AG04449 (cell line): ENCODE measurements at regions of chr19 and their contacts with region 1.

Region 1: GRCh38 chr19:51338563-51339312 is 3.2 kb downstream of the VSIG10L start:
- DNase-seq: no peak
- H3K4me3 ChIP-seq: peak overlapping the region; percentile 74
- CTCF ChIP-seq: peak; percentile 93

Region 2: DNA sequence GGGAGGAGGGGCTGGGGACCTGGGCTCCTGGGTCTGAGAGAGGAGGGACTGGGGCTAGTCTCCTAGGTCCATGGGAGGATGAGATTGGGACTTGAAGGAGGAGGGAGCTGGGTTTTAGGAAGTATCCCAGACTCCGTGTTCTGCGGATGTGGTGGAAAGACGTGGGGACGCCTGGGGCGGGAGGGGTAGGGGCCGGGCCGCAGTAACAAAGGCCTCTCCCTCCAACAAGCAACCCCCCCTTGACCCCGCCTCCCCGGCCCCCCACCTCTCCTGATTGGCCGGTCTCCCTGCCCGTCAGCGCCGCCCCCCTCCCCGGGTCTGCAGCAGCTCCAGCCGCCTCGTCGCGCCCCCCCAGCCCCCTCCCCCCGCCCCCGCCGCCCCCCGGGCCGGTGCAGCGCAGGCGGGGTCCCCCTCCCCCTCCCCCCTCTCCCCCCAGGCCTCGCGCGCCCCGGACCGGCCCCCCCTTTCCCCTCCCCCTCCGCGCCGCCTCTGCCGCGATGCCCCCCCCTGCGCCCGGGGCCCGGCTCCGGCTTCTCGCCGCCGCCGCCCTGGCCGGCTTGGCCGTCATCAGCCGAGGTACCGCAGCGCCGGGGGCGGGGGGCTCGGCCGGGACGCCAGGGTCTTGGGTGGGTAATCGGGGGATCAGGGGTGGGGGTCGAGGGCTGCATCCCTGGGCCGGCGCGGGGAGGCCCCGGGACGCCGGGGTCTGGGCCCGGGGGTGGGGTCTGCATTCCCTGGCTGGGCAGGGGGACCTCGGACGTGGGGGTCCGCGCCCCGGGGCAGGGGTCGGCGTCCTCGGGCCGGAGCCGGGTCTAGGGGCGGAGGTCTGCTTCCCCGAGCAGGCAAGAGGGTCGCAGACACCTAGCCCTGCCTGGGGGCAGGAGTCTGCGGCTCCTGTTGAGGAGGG is 27.1 kb before region 1 on chr19 and contains the start of gene IGLON5:
- CTCF ChIA-PET with region 1: no interaction called
- POLR2A ChIA-PET with region 1: no interaction called
- DNase-seq: no peak
- H3K4me3 ChIP-seq: no peak within 1 kb of the TSS
- CTCF ChIP-seq: no peak

Region 3: GRCh38 chr19:51367565-51368365 is 29.0 kb after region 1 on chr19:
- CTCF ChIA-PET with region 1: interaction called, 10 read pairs
- POLR2A ChIA-PET with region 1: interaction called, 14 read pairs
- DNase-seq: peak; percentile 92
- H3K4me3 ChIP-seq: peak overlapping the region; percentile 89
- CTCF ChIP-seq: no peak